OCI-LY7 (cell line): ENCODE measurements at regions of chr19 and their contacts with region 1.

Region 1: GRCh38 chr19:925526-926322 is at the start of gene ARID3A:
- DNase-seq: peak; percentile 85
- H3K4me3 ChIP-seq: peak within 1 kb of the TSS; percentile 91
- H3K27ac ChIP-seq: peak within 1 kb of the TSS; percentile 49
- H3K4me1 ChIP-seq: peaks cover 21% of the 10 kb centered on the region
- CTCF ChIP-seq: no peak
- total RNA-seq, gene ARID3A: 7.9 and 9.9 TPM in 2 replicates

Region 2: DNA sequence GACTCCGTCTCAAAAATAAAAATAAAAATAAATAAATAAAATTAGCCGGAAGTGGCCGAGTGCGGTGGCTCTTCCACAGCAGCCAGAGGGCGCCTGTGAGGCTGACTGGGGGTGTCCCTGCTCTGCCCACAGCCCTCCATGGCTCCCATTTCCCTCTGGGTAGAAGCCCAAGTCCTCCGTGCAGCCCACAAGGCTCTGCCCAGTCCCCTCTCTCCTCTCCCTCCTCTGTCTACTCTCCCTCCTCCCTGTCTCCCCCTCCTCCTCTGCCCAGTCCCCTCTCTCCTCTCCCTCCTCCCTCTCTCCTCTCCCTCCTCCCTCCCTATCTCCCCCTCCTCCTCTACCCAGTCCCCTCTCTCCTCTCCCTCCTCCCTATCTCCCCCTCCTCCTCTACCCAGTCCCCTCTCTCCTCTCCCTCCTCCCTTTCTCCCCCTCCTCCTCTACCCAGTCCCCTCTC is 154.4 kb before region 1 on chr19:
- CTCF ChIA-PET with region 1: no interaction called
- POLR2A ChIA-PET with region 1: no interaction called
- intact Hi-C with region 1: loop called (anchors 1 kb)
- DNase-seq: peak; percentile 45
- H3K4me3 ChIP-seq: no peak overlapping the region
- H3K27ac ChIP-seq: no peak overlapping the region
- H3K4me1 ChIP-seq: no peaks in the 10 kb centered on the region
- CTCF ChIP-seq: peak; percentile 61

Region 3: GRCh38 chr19:947265-948036 is 21.7 kb after region 1 on chr19:
- CTCF ChIA-PET with region 1: no interaction called
- POLR2A ChIA-PET with region 1: no interaction called
- intact Hi-C with region 1: loop called (anchors 2 kb)
- DNase-seq: peak; percentile 88
- H3K4me3 ChIP-seq: no peak overlapping the region
- H3K27ac ChIP-seq: no peak overlapping the region
- H3K4me1 ChIP-seq: peaks cover 40% of the 10 kb centered on the region
- CTCF ChIP-seq: no peak

Region 4: GRCh38 chr19:984165-984967 is 58.6 kb after region 1 on chr19 and contains the start of gene WDR18:
- CTCF ChIA-PET with region 1: interaction called, 5 read pairs
- POLR2A ChIA-PET with region 1: interaction called, 7 read pairs
- intact Hi-C with region 1: loop called (anchors 1 kb)
- DNase-seq: peak; percentile 93
- H3K4me3 ChIP-seq: peak within 1 kb of the TSS; percentile 92
- H3K27ac ChIP-seq: peak within 1 kb of the TSS; percentile 29
- H3K4me1 ChIP-seq: peaks cover 24% of the 10 kb centered on the region
- CTCF ChIP-seq: no peak
- total RNA-seq, gene WDR18: 61.6 and 74.7 TPM in 2 replicates

Region 5: DNA sequence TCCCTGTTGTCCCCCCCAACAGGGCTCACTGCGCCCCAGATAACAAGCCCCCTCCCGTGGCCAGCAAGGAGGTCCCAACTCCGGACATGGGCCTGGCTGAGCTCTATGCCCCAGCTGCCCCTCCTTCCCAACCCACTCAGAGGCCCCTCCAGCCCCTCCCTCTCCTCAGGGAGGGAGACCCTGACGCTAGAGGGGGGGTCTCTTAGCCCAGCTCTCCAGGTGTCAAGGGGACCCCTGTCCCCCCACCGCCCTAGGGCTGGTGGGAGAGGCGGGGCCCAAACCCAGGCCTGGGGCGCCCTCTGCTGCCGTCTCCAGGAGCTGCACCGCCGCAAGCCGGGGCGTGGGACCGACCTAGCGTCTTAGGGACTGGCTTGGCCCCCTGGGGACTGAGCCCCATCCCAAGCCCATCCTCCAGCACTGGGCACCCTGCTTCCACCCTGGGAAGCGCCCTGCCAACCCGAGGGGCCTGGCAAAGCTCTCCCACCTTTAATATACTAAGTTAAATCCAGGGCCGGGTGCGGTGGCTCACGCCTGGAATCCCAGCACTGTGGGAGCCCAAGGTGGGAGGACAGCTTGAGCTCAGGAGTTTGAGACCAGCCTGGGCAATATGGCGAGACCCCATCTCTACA is 75.9 kb after region 1 on chr19:
- CTCF ChIA-PET with region 1: no interaction called
- POLR2A ChIA-PET with region 1: no interaction called
- intact Hi-C with region 1: loop called (anchors 1 kb)
- DNase-seq: peak; percentile 64
- H3K4me3 ChIP-seq: no peak overlapping the region
- H3K27ac ChIP-seq: no peak overlapping the region
- H3K4me1 ChIP-seq: no peaks in the 10 kb centered on the region
- CTCF ChIP-seq: peak; percentile 88